ENCODE measurements at regions of chr14 and their contacts with region 1.

Region 1: DNA sequence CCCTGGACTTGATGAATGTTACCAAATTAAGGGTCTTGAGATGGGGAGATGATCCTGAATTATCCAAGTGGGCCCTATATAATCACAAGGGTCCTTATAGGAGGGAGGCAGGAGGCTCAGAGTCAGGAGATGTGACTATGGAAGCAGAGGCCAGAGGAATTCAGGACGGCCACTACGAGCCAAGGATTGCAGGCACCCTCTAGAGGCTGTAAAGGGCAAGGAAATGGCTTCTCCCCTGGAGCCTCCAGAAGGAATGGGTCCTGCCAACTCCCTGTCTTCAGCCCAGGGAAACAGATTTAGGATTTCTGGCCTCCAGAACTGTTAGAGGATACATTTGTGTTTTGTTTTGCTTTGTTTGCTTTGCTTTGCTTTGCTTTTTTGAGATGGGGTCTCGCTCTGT is 8.8 kb downstream of the BDKRB1 start:
- DNase-seq: no peak
- ATAC-seq: no peak
- H3K4me3 ChIP-seq: no peak overlapping the region
- H3K27ac ChIP-seq: no peak overlapping the region
- H3K4me1 ChIP-seq: no peaks in the 10 kb centered on the region
- H3K27me3 ChIP-seq: peaks cover 0 to 2% (median 0%) of the 10 kb centered on the region in 9 donors
- CTCF ChIP-seq: peak in 1 of 12 donors; percentile 3
- POLR2A ChIP-seq: no peak

Region 2: DNA sequence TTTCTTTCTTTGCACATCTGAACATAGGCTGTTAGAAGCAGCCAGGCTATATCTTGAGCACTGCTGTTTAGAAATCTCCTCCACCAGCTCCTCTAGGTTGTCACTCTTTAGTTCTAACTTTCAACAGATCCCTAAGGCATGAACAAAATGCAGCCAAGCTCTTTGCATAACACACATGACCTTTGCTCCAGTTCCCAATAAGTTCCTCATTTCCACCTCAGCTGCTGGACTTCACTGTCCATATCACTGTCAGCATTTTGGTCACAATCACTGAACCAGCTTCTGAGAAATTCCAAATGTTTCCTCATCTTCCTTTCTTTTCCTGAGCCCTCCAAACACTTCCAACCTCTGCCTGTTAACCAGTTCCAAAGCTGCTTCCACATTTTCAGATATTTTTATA is 253.2 kb before region 1 on chr14:
- intact Hi-C with region 1: loop called in 1 of 10 experiments (anchors 5 kb)
- DNase-seq: no peak
- ATAC-seq: no peak
- H3K4me3 ChIP-seq: no peak overlapping the region
- H3K27ac ChIP-seq: no peak overlapping the region
- H3K4me1 ChIP-seq: no peaks in the 10 kb centered on the region
- H3K27me3 ChIP-seq: peaks cover 0 to 4% (median 0%) of the 10 kb centered on the region in 9 donors
- CTCF ChIP-seq: no peak
- POLR2A ChIP-seq: no peak

Region 3: DNA sequence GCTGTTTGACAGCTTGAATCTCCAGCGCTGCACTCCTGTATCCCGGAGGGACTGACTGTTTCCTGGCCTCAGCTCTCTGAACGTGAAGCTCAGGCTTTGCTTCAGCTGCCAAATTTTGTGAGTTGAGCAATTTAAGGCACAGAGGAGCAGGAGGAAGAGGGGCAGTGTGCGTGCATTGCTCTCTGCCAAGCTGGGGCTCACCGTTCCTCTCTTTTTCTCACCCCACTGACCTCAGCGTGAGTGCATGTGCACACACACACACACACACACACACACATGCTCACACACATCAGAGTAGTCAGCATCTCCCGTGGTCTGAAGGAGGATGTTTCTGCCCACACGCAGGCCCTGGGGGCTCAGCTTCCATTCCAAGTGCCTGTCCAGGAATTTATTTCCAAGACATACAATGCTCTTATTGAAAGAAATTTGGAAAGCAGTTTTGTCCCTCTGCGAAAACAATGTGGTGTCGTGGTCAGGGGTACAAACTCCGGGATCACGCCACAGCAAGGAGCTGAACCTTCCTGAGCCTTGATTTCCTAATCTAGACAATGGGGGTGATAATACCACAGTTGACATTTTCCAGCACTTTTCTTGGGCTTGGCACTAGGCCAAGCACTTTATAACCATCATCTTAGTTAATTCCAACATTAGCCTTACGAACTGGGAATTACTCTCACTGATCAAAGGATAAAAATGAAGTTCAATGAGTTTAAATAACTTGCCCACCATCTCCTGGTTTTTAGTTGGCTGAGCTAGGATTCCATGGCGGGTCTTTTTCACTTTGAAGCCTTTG is 87.8 kb before region 1 on chr14:
- intact Hi-C with region 1: no loop called
- DNase-seq: peak in 2 of 5 donors; percentile 36 to 37
- ATAC-seq: peak in 3 of 4 donors; percentile 23 to 78 (median 63)
- H3K4me3 ChIP-seq: no peak overlapping the region
- H3K27ac ChIP-seq: no peak overlapping the region
- H3K4me1 ChIP-seq: peaks cover 0 to 24% (median 6%) of the 10 kb centered on the region in 12 donors
- H3K27me3 ChIP-seq: peaks cover 0 to 35% (median 3%) of the 10 kb centered on the region in 9 donors
- CTCF ChIP-seq: no peak
- POLR2A ChIP-seq: no peak

Measured in heart left ventricle (tissue), 16 donors.